Activated CD4-positive, alpha-beta T cell treated with anti-CD3 and anti-CD28 coated beads, Interleukin-2, amount 10 ng/mL, durations not matched to agents 7 days and 5 days (primary cell): ENCODE measurements at regions of chr7 and their contacts with region 1.

Region 1: DNA sequence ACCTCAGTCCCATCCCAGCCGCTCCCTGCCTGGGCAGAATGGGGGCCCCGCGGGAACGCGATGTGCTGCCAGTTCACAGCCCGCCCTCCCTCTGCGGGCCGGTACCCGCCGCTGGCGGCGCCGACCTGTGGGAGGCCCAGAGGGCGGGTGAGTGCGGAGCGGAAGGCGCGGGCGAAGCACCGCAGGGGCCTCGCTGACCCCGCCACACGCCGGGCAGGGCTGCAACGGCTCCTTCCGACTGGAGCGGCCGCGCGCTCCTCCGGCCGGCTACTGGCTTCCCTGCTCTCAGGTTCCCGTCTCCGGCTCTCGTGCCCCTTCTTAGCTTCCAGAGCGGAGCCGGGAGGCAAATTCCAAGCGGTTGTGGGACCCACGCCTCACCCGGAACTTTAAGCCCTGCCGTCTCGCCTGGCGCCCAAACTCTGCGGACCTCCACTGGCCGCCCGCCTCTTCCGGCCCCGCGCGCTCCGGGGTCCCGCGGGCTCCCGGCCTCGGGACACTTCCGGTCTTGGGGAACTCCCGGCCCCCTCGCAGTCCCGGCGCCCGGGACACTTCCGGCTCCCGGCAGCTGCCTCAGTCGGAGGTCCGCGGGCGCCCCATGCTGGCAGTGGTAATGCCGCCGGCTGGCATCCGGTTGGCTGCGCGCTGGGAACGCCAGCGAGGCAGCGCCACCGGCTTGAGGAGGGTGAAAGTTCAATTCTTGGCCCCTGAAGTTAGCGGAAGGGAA is at the start of gene CYREN:
- DNase-seq: peak; percentile 91
- H3K4me3 Mint-ChIP-seq: peak within 1 kb of the TSS; percentile 90
- H3K27ac Mint-ChIP-seq: peak within 1 kb of the TSS; percentile 96
- H3K4me1 Mint-ChIP-seq: peaks cover 55% of the 10 kb centered on the region
- H3K27me3 Mint-ChIP-seq: no peaks in the 10 kb centered on the region
- total RNA-seq, gene CYREN: 34.4 to 39.7 TPM

Region 2: GRCh38 chr7:134986363-134987251 is 183.8 kb before region 1 on chr7 and contains the start of gene AGBL3:
- CTCF ChIA-PET with region 1: interaction called, 10 read pairs
- POLR2A ChIA-PET with region 1: no interaction called
- DNase-seq: peak; percentile 95
- H3K4me3 Mint-ChIP-seq: peak within 1 kb of the TSS; percentile 91
- H3K27ac Mint-ChIP-seq: peak within 1 kb of the TSS; percentile 93
- H3K4me1 Mint-ChIP-seq: peaks cover 36% of the 10 kb centered on the region
- H3K27me3 Mint-ChIP-seq: no peaks in the 10 kb centered on the region
- total RNA-seq, gene AGBL3: 1.9 TPM

Region 3: GRCh38 chr7:135023622-135024021 is 146.8 kb before region 1 on chr7:
- CTCF ChIA-PET with region 1: no interaction called
- POLR2A ChIA-PET with region 1: no interaction called
- DNase-seq: no peak
- H3K4me3 Mint-ChIP-seq: no peak overlapping the region
- H3K27ac Mint-ChIP-seq: no peak overlapping the region
- H3K4me1 Mint-ChIP-seq: no peaks in the 10 kb centered on the region
- H3K27me3 Mint-ChIP-seq: no peaks in the 10 kb centered on the region

Region 4: GRCh38 chr7:135147899-135148721 is 22.3 kb before region 1 on chr7 and contains the start of gene TMEM140:
- CTCF ChIA-PET with region 1: interaction called, 11 read pairs
- POLR2A ChIA-PET with region 1: interaction called, 6 read pairs
- DNase-seq: peak; percentile 79
- H3K4me3 Mint-ChIP-seq: peak within 1 kb of the TSS; percentile 86
- H3K27ac Mint-ChIP-seq: peak within 1 kb of the TSS; percentile 96
- H3K4me1 Mint-ChIP-seq: peaks cover 58% of the 10 kb centered on the region
- H3K27me3 Mint-ChIP-seq: no peaks in the 10 kb centered on the region
- total RNA-seq, gene TMEM140: 25.3 to 27.7 TPM

Region 5: DNA sequence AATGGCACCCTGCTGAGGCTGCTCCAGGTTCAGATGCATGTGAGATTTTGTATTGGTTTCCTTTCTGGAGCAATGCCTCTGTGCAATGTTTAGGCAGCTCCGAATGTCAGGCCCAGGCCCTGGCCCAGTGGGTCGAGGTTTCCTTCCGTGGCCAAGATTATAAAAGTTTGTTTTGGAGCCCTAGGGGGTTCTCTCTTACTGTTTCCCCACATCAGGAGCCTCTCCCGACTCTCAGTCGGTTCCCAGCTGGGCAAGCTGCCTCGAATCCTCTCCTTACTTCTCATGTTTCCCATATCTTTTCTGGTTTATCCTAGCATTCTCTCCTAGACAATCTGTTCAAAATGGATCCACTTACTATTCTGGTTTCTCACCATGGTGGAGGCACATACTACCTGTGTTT is 11.6 kb before region 1 on chr7:
- CTCF ChIA-PET with region 1: interaction called, 11 read pairs
- POLR2A ChIA-PET with region 1: no interaction called
- DNase-seq: no peak
- H3K4me3 Mint-ChIP-seq: no peak overlapping the region
- H3K27ac Mint-ChIP-seq: no peak overlapping the region
- H3K4me1 Mint-ChIP-seq: peaks cover 44% of the 10 kb centered on the region
- H3K27me3 Mint-ChIP-seq: no peaks in the 10 kb centered on the region